Left lung (tissue), 14 donors: ENCODE measurements at regions of chr21 and their contacts with region 1.

Region 1: GRCh38 chr21:33641336-33642026 is at the start of gene CRYZL1:
- DNase-seq: peak; percentile 99 to 100 (median 100)
- ATAC-seq: peak; percentile 89
- H3K4me3 ChIP-seq: peak within 1 kb of the TSS; percentile 82 to 97
- H3K27ac ChIP-seq: peak within 1 kb of the TSS; percentile 91
- H3K4me1 ChIP-seq: peaks cover 7 to 42% of the 10 kb centered on the region in 2 donors
- H3K27me3 ChIP-seq: peaks cover 0 to 11% of the 10 kb centered on the region in 2 donors
- CTCF ChIP-seq: no peak
- polyA plus RNA-seq, gene CRYZL1: 59.4 to 84.5 (median 66.5) TPM

Region 2: DNA sequence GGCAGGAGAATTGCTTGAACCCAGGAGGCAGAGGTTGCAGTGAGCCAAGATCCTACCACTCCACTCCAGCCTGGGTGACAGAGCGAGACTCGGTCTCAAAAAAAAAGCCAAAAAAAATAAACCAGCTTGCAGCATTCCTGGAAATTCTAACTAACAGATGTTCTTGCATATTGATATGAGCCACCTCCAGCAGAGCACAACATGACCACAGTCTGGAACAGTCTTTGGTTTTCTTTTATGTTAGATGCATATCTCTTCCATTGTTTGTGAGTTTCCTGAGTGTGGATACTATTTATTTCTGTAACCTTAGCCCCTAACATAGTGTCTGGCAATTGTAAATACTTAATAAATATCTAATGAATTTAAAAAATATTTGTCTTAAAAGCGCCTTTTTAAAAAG is 292.8 kb before region 1 on chr21:
- intact Hi-C with region 1: no loop called
- DNase-seq: no peak
- ATAC-seq: no peak
- H3K4me3 ChIP-seq: no peak overlapping the region
- H3K27ac ChIP-seq: no peak overlapping the region
- H3K4me1 ChIP-seq: no peaks in the 10 kb centered on the region
- H3K27me3 ChIP-seq: no peaks in the 10 kb centered on the region
- CTCF ChIP-seq: no peak

Region 3: GRCh38 chr21:33412832-33413519 is 228.5 kb before region 1 on chr21:
- intact Hi-C with region 1: no loop called
- DNase-seq: no peak
- ATAC-seq: peak; percentile 33
- H3K4me3 ChIP-seq: no peak overlapping the region
- H3K27ac ChIP-seq: peak overlapping the region in 1 of 2 donors; percentile 24
- H3K4me1 ChIP-seq: peaks cover 6 to 75% of the 10 kb centered on the region in 2 donors
- H3K27me3 ChIP-seq: no peaks in the 10 kb centered on the region
- CTCF ChIP-seq: no peak

Region 4: DNA sequence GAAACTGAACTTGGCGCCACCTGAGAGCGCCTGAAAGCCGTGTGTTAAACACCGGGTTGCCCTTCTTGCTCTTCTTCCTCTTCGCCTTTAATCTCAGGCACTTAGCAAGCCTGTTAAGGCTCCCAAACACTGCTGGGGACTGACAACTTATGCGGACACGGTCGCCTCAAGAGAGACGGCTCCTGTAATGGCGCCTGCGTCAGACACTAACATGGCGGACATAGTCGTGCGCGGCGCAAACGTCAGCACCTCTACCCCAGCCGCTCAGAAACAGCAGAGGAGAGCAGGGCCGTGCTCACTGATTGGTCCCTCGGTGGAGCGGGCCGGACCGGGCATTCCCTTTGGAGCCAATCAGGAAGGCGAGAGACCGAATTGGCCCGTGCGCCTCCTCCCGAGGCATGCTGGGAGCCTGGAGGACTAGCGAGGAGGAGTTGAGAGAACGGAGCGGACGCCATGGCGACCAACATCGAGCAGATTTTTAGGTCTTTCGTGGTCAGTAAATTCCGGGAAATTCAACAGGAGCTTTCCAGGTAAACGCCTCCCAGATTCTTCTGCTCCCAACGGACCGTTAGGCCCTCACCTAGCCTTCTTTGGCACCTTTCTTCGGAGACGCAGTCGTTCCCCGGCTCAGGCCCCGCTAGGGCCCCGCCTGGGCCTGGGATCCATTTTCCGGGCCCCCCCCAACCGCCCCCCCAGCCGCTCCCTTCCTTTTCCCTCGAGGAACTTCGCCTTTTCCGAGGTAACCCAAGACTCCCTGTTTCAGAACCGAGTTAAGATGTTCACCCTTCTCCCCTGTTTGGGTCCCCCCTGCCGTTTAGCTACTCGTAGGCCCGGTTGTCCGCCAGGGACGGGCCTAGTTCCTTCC is 98.6 kb before region 1 on chr21 and contains the start of gene SON:
- intact Hi-C with region 1: no loop called
- DNase-seq: peak; percentile 97 to 100 (median 98)
- ATAC-seq: peak; percentile 96
- H3K4me3 ChIP-seq: peak within 1 kb of the TSS; percentile 61 to 81
- H3K27ac ChIP-seq: peak within 1 kb of the TSS; percentile 99
- H3K4me1 ChIP-seq: peaks cover 17 to 44% of the 10 kb centered on the region in 2 donors
- H3K27me3 ChIP-seq: no peaks in the 10 kb centered on the region
- CTCF ChIP-seq: no peak
- polyA plus RNA-seq, gene SON: 389 to 454 (median 427) TPM

Region 5: DNA sequence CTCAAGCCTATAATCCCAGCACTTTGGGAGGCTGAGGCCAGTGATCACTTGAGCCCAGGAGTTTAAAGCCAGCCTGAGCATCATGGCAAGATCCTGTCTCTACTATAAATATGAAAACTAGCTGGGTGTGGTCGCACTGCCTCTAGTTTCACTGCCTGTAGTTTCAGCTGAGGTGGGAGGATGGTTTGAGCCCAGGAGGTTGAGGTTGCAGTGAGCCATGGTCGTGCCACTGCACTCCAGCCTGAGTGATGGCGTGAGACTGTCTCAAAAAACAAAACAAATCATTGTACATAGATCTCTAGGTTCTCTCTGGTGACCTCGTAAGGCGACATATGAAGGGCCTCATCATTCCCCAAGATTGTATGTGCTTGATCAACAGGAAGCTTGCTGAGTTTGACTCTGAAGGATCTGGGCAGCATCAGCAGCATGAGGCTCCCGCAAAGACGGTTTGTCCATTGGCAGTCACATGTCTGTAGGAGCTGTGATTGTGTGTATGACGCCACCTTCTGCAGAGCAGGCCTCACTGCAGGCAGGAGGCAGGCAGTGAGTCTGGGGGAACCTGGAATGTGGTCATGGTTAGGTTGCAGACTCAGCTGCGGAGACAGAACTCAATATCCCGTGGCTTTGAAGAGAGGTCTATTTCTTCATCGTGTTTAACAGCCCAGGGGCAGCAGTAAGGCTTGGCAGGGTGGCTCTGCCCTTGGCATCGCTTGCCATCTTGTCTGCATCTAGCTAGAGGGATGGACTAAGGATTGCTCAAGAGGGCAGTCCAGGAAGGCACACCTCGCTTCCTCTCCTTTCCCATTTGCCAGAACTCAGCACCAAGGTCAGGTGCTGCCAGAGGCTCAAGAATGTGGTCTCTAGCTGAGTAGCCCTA is 260.2 kb after region 1 on chr21:
- intact Hi-C with region 1: loop called in 1 of 2 experiments (anchors 10 kb)
- DNase-seq: peak in 1 of 4 donors; percentile 54
- ATAC-seq: peak; percentile 87
- H3K4me3 ChIP-seq: no peak overlapping the region
- H3K27ac ChIP-seq: no peak overlapping the region
- H3K4me1 ChIP-seq: no peaks in the 10 kb centered on the region
- H3K27me3 ChIP-seq: no peaks in the 10 kb centered on the region
- CTCF ChIP-seq: peak; percentile 27 to 35

Region 6: DNA sequence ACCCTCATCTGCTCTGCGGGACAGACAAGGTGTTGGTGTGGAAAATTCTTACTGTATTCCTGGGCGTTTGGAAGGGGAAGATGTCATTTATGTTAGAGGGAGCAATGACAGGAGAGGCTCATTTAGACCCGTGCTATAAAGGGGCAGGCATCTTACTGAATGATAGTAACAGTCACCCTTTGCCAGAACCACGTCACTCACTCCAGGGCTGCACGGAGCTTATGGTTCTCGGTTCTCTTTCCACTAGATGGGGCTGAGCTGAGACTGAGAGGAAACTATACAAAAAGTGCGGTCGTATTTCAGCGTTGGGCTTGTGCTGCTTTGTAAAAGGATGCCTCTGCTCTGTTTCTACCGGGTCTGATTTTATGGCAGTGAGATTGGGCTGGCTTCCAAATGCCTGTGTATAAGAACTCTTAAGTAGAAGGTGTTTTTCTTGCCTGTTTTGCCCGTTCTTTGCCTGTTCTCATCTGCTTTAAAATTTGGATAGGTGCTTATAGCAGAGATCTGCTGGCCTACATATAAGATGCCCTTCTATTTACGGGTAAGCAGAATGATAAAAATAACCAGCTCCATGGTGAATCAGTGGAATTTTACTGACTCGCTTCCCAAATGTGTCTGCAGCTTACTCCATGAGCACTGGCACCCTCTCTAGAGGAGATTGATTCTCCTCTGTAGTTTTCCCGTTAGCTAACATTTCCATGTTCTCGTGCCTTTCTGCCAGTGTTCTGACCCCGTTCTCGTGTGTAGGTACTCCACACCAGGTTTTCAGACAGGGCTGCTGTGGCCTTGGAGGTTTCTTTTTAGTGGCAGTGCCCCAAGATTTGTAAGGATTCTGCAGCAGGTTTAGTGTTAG is 487.8 kb after region 1 on chr21:
- intact Hi-C with region 1: no loop called
- DNase-seq: peak in 2 of 4 donors; percentile 52 to 77
- ATAC-seq: peak; percentile 83
- H3K4me3 ChIP-seq: no peak overlapping the region
- H3K27ac ChIP-seq: peak overlapping the region; percentile 38 to 78
- H3K4me1 ChIP-seq: peaks cover 17 to 54% of the 10 kb centered on the region in 2 donors
- H3K27me3 ChIP-seq: no peaks in the 10 kb centered on the region
- CTCF ChIP-seq: peak in 1 of 2 donors; percentile 13